ENCODE measurements at regions of chr16 and their contacts with region 1.

Region 1: GRCh38 chr16:68902008-68902968 is 59.0 kb downstream of the TANGO6 start:
- DNase-seq: peak; percentile 54
- ATAC-seq: peak; percentile 88
- H3K4me3 Mint-ChIP-seq: no peak overlapping the region
- H3K27ac Mint-ChIP-seq: peak overlapping the region; percentile 67
- H3K4me1 Mint-ChIP-seq: peaks cover 22% of the 10 kb centered on the region
- H3K27me3 Mint-ChIP-seq: no peaks in the 10 kb centered on the region
- CTCF ChIP-seq: peak; percentile 50

Region 2: GRCh38 chr16:68833251-68833650 is 69.0 kb before region 1 on chr16:
- CTCF ChIA-PET with region 1: no interaction called
- POLR2A ChIA-PET with region 1: no interaction called
- DNase-seq: no peak
- ATAC-seq: no peak
- H3K4me3 Mint-ChIP-seq: no peak overlapping the region
- H3K27ac Mint-ChIP-seq: no peak overlapping the region
- H3K4me1 Mint-ChIP-seq: no peaks in the 10 kb centered on the region
- H3K27me3 Mint-ChIP-seq: no peaks in the 10 kb centered on the region
- CTCF ChIP-seq: no peak

Region 3: GRCh38 chr16:68843482-68844210 is 58.6 kb before region 1 on chr16 and contains the start of gene TANGO6:
- CTCF ChIA-PET with region 1: interaction called, 12 read pairs
- POLR2A ChIA-PET with region 1: no interaction called
- DNase-seq: peak; percentile 86
- ATAC-seq: peak; percentile 94
- H3K4me3 Mint-ChIP-seq: peak within 1 kb of the TSS; percentile 72
- H3K27ac Mint-ChIP-seq: peak within 1 kb of the TSS; percentile 86; the same call in 1 of the 2 replicates
- H3K4me1 Mint-ChIP-seq: peaks cover 11% of the 10 kb centered on the region
- H3K27me3 Mint-ChIP-seq: no peaks in the 10 kb centered on the region
- CTCF ChIP-seq: no peak
- total RNA-seq, gene TANGO6: 12.0 to 15.6 TPM (median 12.6 TPM) in 3 replicates

Region 4: DNA sequence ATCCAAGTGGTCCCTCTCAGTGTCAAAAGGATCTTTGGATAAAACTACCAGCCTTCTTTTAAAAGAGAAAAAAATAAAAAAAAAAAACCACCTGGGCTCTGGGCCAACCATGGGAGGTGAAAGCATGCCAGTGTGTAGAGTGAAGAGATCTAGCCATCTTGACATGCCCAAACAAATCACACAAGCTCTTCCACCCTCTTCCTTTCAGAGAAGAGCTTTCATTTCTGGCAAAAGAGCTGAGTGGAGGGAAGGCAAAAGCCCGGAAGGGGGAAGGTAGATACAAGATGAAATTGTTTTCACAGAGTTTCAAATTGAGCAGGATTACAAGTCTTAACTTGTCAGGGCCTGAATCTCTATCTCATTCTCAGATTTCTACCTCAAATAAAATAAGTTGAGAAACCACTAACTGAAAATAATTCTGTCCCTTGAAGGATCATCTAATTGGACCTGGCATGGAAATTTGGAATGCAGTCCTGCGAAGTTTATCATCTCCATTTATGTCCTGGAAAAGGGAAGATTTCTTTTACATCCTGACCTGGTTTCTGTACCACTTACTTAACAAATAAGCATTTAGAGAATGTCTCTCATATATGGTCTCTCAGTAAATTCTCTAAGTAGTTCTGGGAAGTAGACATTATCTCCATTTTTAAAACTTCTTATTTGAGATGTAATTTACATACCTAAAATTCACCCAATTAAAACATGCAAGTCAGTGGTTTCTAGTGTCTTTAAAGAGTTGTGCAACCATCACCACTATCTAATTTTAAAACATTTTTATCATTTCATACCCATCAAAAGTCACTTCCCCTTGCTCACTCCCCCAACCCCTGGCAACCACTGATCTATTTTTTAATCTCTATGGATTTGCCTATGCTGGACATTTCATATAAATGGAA is 34.7 kb after region 1 on chr16:
- CTCF ChIA-PET with region 1: interaction called, 10 read pairs
- POLR2A ChIA-PET with region 1: no interaction called
- DNase-seq: no peak
- ATAC-seq: no peak
- H3K4me3 Mint-ChIP-seq: no peak overlapping the region
- H3K27ac Mint-ChIP-seq: peak overlapping the region; percentile 84; the same call in 1 of the 2 replicates
- H3K4me1 Mint-ChIP-seq: peaks cover 5% of the 10 kb centered on the region; the same call in 1 of the 2 replicates
- H3K27me3 Mint-ChIP-seq: no peaks in the 10 kb centered on the region
- CTCF ChIP-seq: no peak

Region 5: DNA sequence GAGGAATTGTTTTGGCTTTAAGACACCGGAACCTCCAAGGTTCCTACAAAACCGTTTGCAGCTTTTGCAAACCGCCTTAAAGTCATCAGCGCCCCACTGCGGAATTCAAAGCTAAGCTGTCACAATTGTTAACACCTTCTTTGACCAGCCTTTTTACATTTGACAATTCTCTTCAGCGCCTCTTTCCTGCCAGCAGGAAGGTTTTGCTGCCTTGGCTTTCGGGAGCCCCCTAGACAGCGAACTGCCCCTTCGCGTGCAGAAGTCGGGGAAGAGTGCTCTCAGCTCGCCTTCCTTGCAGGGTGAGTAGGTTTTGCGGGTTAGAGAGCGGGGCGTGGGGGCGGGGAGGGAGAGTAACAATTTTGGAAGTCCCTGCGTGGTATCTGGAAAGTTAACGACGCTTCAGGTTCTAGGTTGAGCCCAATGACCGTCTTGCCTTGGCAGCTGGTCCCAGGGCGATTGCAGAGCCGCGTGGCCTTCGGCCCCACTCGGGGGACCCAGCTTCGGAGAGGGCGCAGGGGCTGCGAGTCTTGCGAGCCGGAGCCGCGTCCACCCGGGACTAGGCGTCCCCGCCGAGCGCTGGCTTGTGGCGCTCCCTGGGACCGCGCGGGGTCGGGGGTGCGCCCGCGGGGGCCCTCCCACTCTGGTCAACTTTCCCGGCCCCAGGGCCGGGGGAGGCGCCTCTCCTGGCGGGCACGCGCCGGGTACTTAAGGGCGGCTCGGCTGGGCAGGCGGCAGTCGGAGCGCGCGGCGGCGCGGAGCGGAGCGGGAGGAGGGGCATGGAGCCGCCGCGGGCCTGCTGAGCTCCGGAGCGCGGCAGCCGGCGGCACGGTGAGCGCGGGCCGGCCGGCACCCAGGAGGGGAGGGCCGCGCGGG is 203.4 kb after region 1 on chr16 and contains the start of gene HAS3:
- CTCF ChIA-PET with region 1: interaction called, 15 read pairs
- POLR2A ChIA-PET with region 1: no interaction called
- DNase-seq: peak; percentile 74
- ATAC-seq: peak; percentile 25
- H3K4me3 Mint-ChIP-seq: peak within 1 kb of the TSS; percentile 96
- H3K27ac Mint-ChIP-seq: peak within 1 kb of the TSS; percentile 98
- H3K4me1 Mint-ChIP-seq: peaks cover 67% of the 10 kb centered on the region
- H3K27me3 Mint-ChIP-seq: peaks cover 6% of the 10 kb centered on the region; the same call in 1 of the 2 replicates
- CTCF ChIP-seq: no peak
- total RNA-seq, gene HAS3: 54.4 to 66.9 TPM (median 56.0 TPM) in 3 replicates

Region 6: GRCh38 chr16:69123910-69124309 is 221.6 kb after region 1 on chr16:
- CTCF ChIA-PET with region 1: interaction called, 26 read pairs
- POLR2A ChIA-PET with region 1: no interaction called
- DNase-seq: peak; percentile 50
- ATAC-seq: peak; percentile 32
- H3K4me3 Mint-ChIP-seq: no peak overlapping the region
- H3K27ac Mint-ChIP-seq: 0 out of 2 replicates have a peak overlapping the region, but pooled peaks have one; percentile 76
- H3K4me1 Mint-ChIP-seq: no peaks in the 10 kb centered on the region
- H3K27me3 Mint-ChIP-seq: no peaks in the 10 kb centered on the region
- CTCF ChIP-seq: peak; percentile 53